A549 (cell line): ENCODE measurements at regions of chr1 and their contacts with region 1.

Region 1: GRCh38 chr1:6385488-6386191 is 7.9 kb downstream of the ACOT7 start:
- DNase-seq: peak; percentile 65 to 84
- ATAC-seq: peak; percentile 88 to 95
- H3K4me3 ChIP-seq: peak overlapping the region; percentile 37
- H3K27ac ChIP-seq: peak overlapping the region; percentile 83 to 90
- H3K4me1 ChIP-seq: peaks cover 23% of the 10 kb centered on the region
- CTCF ChIP-seq: no peak
- EP300 ChIP-seq: no peak
- POLR2A ChIP-seq: no peak
- RAD21 ChIP-seq: no peak

Region 2: DNA sequence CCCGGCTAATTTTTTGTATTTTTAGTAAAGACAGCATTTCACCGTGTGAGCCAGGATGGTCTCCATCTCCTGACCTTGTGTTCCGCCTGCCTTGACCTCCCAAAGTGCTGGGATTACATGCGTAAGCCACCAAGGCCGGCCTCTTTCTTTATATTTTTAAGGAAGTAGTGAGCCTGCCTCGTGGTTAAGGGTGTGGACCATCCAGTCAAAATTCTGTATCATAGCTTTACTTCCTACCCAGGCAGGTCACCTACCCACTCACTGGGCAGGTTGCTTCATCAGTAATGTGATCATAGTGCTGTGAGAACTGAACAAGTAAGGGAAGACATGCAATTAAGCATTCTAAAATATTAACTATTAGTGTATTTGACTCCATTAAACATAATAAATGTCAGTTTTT is 16.0 kb after region 1 on chr1:
- CTCF ChIA-PET with region 1: interaction called, 575 read pairs
- POLR2A ChIA-PET with region 1: no interaction called
- DNase-seq: no peak
- ATAC-seq: no peak
- H3K4me3 ChIP-seq: no peak overlapping the region
- H3K27ac ChIP-seq: no peak overlapping the region
- H3K4me1 ChIP-seq: no peaks in the 10 kb centered on the region
- CTCF ChIP-seq: no peak
- EP300 ChIP-seq: no peak
- POLR2A ChIP-seq: no peak
- RAD21 ChIP-seq: no peak